ENCODE measurements at regions of chr9 and their contacts with region 1.

Region 1: GRCh38 chr9:137114610-137115391 is at the start of gene DPP7:
- DNase-seq: peak; percentile 84
- ATAC-seq: peak; percentile 91
- H3K4me3 Mint-ChIP-seq: peak within 1 kb of the TSS; percentile 74
- H3K27ac Mint-ChIP-seq: no peak within 1 kb of the TSS
- H3K4me1 Mint-ChIP-seq: peaks cover 21% of the 10 kb centered on the region
- H3K27me3 Mint-ChIP-seq: no peaks in the 10 kb centered on the region
- CTCF ChIP-seq: no peak
- total RNA-seq, gene DPP7: 254 and 259 TPM in 2 replicates

Region 2: GRCh38 chr9:137055385-137056364 is 59.1 kb before region 1 on chr9:
- CTCF ChIA-PET with region 1: no interaction called
- POLR2A ChIA-PET with region 1: no interaction called
- intact Hi-C with region 1: no loop called
- DNase-seq: no peak
- ATAC-seq: no peak
- H3K4me3 Mint-ChIP-seq: no peak overlapping the region
- H3K27ac Mint-ChIP-seq: no peak overlapping the region
- H3K4me1 Mint-ChIP-seq: peaks cover 3% of the 10 kb centered on the region
- H3K27me3 Mint-ChIP-seq: peaks cover 6% of the 10 kb centered on the region
- CTCF ChIP-seq: no peak

Region 3: DNA sequence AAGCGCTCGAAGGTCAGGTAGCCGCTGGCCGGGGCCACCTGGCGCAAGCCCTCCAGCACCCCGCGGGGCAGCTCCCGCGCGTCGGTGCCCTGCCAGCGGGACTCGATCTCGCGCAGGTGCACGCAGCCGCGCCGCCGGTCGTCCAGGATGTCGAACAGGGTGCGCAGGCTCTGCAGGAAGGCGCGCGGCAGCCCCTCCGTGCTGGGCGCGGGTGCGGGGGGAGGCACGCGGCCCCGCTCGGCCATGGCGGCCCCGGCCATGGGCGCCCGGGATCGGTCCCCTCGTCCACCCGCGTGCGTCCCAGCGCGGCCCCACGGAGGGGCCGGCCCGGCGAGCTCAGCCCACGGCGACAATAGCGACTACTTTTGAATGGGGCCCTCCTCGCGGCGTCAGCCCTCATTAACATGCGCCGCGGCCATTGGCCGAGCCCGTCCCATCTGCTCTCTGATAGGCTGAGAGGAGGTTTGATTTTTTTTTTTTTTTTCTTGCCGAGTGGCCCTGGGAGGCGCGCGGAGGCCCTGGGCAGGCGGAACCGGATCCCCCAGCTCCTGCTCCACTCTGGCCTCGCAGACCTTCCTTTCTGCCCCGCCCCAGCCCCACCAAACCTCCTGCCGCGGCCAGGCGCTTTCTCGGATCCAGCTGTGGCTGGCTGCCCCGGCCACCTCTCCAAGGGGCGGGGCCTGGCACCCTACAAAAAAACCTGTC is 44.4 kb before region 1 on chr9 and contains the start of gene SAPCD2:
- CTCF ChIA-PET with region 1: interaction called, 3 read pairs
- POLR2A ChIA-PET with region 1: interaction called, 3 read pairs
- intact Hi-C with region 1: loop called (anchors 1 kb)
- DNase-seq: peak; percentile 80
- ATAC-seq: peak; percentile 83
- H3K4me3 Mint-ChIP-seq: peak within 1 kb of the TSS; percentile 72
- H3K27ac Mint-ChIP-seq: peak within 1 kb of the TSS; percentile 41
- H3K4me1 Mint-ChIP-seq: peaks cover 24% of the 10 kb centered on the region
- H3K27me3 Mint-ChIP-seq: peaks cover 4% of the 10 kb centered on the region
- CTCF ChIP-seq: no peak
- total RNA-seq, gene SAPCD2: 0.80 and 0.81 TPM in 2 replicates

Region 4: DNA sequence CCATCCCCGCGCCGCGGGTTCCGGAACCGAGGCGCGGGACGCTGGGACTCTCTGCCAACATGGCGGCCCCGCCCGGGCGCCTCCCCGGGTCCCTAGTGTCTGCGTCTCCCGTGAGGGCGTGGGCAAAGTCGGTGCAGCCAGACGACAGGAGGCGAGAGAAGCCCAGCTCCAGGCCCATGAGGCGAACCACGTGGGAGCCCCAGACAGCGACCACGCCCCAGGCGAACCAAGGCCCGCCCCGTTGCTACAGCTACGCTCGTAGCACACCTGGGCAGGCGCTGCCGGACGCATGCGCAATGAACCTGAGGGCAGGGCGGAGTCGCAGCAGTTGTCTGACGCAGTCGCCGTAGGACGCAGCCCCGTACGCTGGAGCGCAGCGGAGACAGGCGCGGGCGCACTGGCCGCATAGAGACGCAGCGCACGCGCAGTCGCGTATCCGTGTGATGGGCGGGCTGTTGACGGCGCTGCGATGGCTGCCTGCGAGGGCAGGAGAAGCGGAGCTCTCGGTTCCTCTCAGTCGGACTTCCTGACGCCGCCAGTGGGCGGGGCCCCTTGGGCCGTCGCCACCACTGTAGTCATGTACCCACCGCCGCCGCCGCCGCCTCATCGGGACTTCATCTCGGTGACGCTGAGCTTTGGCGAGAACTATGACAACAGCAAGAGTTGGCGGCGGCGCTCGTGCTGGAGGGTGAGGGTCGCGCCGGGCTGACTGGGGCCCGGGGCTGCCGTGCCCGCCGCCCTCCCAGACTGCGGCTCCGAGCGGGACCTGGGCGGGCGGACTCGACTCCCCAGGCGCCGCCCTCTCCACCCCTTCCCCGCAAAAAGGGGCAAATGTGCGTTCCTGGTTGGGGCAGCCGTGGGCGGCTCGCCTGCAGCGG is 28.0 kb before region 1 on chr9 and contains the start of gene MAN1B1:
- CTCF ChIA-PET with region 1: interaction called, 3 read pairs
- POLR2A ChIA-PET with region 1: interaction called, 14 read pairs
- intact Hi-C with region 1: loop called (anchors 1 kb)
- DNase-seq: peak; percentile 98
- ATAC-seq: peak; percentile 77
- H3K4me3 Mint-ChIP-seq: peak within 1 kb of the TSS; percentile 93
- H3K27ac Mint-ChIP-seq: peak within 1 kb of the TSS; percentile 97
- H3K4me1 Mint-ChIP-seq: peaks cover 49% of the 10 kb centered on the region
- H3K27me3 Mint-ChIP-seq: no peaks in the 10 kb centered on the region
- CTCF ChIP-seq: no peak
- total RNA-seq, gene MAN1B1: 33.6 and 37.7 TPM in 2 replicates

Region 5: DNA sequence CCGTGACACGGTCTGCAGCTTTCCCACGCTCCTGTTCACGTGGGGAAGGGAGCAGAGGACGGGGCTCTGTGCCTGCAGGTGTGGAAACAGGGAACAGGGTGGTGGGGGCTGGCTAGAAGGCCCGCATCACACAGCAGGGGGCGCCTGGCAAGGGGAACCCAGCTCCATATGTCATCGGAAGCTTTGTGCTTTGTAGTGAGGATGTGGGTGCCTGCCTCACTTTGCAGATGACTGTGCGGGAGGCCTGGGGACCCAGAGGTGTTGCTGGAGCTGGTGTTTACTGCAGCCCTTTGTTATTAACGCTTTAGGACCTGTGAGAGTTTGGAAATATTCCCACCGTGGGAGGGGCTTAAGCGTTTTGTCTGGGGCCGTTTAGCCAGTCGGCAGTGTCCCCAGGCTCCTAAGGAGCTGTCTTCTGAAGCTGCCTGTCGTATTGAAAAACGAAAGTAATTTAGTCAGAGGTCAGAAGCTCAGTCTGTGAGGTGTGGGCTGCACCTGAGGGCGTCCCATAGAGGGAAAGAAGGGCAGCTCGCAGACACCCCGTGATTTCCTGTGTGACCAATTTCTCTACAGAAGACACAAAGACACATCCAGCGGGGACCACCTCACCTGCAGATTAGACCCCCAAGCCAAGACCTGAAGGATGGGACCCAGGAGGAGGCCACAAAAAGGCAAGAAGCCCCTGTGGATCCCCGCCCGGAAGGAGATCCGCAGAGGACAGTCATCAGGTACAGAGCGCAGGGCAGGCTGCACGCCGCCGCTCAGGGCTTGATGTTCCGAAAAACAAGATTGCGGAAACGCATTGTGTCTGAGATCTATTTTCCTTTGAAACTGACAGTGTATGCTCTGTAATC is 18.9 kb before region 1 on chr9:
- CTCF ChIA-PET with region 1: interaction called, 5 read pairs
- POLR2A ChIA-PET with region 1: interaction called, 5 read pairs
- intact Hi-C with region 1: loop called (anchors 1 kb)
- DNase-seq: peak; percentile 49
- ATAC-seq: peak; percentile 97
- H3K4me3 Mint-ChIP-seq: peak overlapping the region; percentile 60
- H3K27ac Mint-ChIP-seq: peak overlapping the region; percentile 83
- H3K4me1 Mint-ChIP-seq: peaks cover 7% of the 10 kb centered on the region
- H3K27me3 Mint-ChIP-seq: no peaks in the 10 kb centered on the region
- CTCF ChIP-seq: no peak

Region 6: DNA sequence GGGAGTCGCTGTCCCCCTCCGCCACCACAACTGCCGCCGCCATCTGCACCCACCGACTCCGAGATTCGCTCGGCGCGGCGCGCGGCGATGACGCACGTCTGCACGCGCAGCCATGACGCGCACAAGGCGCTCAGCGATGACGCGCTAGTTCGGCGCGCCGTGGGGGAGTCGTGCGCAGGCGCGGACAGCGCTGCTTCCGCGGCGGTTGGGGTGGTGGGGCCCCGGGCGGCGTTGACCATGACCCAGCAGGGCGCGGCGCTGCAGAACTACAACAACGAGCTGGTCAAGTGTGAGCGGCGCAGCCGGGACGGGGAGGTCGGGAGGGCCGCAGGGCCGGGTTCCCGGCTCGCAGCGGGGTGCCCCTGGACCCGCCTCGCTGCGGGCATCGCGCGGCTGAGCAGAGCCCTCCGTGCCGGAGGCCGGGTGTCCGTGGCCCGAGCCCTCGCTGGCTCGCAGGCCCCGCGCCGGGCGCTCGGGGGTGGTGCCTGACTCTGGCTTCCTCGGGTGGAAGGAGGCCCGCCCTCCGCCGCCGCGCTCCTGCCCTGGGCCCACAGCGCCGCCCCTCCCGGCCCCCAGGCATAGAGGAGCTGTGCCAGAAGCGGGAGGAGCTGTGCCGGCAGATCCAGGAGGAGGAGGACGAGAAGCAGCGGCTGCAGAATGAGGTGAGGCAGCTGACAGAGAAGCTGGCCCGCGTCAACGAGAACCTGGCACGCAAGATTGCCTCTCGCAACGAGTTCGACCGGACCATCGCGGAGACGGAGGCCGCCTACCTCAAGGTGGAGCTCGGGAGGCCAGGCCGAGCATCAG is 73.9 kb after region 1 on chr9 and contains the starts of genes ANAPC2 and SSNA1:
- CTCF ChIA-PET with region 1: no interaction called
- POLR2A ChIA-PET with region 1: interaction called, 3 read pairs
- intact Hi-C with region 1: loop called (anchors 1 kb)
- DNase-seq: peak; percentile 99
- ATAC-seq: peak; percentile 79
- H3K4me3 Mint-ChIP-seq: peak within 1 kb of the TSS; percentile 92
- H3K27ac Mint-ChIP-seq: peak within 1 kb of the TSS; percentile 91
- H3K4me1 Mint-ChIP-seq: peaks cover 36% of the 10 kb centered on the region
- H3K27me3 Mint-ChIP-seq: no peaks in the 10 kb centered on the region
- CTCF ChIP-seq: no peak
- total RNA-seq, gene ANAPC2: 75.7 and 93.9 TPM in 2 replicates
- total RNA-seq, gene SSNA1: 71.9 and 76.8 TPM in 2 replicates

Region 7: DNA sequence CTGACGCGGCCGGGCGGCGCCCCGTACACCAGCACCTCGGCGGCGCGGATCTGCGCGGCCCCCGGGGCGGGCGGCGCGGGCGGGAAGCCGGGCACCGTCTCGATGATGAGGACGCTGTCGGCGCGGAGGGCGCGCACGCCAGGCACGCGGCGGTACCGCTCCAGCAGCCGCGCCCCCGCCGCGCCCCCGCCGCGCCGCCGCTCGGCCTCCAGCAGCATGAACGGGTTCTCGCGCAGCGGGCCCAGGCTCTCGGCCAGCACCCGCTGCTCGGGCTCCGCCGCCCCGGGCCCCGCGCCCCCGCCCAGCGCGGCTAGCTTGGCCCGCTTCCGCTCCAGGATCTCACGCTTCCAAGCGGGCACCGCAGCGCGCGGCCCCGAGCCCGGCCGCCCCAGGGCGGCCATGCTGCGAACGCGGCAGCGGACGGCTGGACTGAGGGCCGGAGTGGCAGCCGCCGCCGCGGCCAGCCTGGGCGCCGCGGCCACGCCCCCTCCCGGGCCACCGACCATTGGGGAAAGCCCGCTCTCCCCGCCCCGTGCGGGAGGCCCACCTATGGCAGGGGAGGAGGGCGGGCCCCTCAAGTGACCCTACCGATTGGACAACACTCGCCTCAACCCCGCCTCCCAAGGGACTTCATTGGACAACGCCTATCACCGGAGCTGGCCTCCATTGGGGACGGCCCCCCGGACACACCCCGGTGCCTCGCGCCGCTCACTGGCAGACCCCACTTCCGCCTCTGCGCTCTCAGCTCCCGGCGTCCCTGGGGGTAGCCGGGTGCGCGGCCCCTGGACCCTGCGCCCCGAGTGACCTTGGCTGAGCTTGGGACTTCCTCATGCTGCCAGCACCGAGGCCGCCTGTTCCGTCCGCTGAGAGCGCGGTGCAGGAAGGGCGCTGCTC is 85.8 kb after region 1 on chr9 and contains the start of gene TPRN:
- CTCF ChIA-PET with region 1: no interaction called
- POLR2A ChIA-PET with region 1: no interaction called
- intact Hi-C with region 1: loop called (anchors 2 kb)
- DNase-seq: peak; percentile 92
- ATAC-seq: peak; percentile 95
- H3K4me3 Mint-ChIP-seq: peak within 1 kb of the TSS; percentile 83
- H3K27ac Mint-ChIP-seq: peak within 1 kb of the TSS; percentile 79
- H3K4me1 Mint-ChIP-seq: peaks cover 39% of the 10 kb centered on the region
- H3K27me3 Mint-ChIP-seq: no peaks in the 10 kb centered on the region
- CTCF ChIP-seq: no peak
- total RNA-seq, gene TPRN: 9.3 and 11.4 TPM in 2 replicates

Measured in activated B cell treated with CpG ODN at 0.5 μM for 24 hours (primary cell).